Posterior vena cava (tissue), 2 donors: ENCODE measurements at regions of chr18 and their contacts with region 1.

Region 1: GRCh38 chr18:36296650-36297416 is 680 bp upstream of the FHOD3 start:
- DNase-seq: peak; percentile 87

Region 2: GRCh38 chr18:36441426-36442240 is 144.8 kb after region 1 on chr18:
- intact Hi-C with region 1: loop called in 1 of 2 experiments (anchors 10 kb)
- DNase-seq: no peak

Region 3: GRCh38 chr18:36572135-36572856 is 275.5 kb after region 1 on chr18:
- intact Hi-C with region 1: loop called (anchors 1 to 5 kb)
- DNase-seq: no peak

Region 4: GRCh38 chr18:36757081-36757480 is 460.2 kb after region 1 on chr18:
- intact Hi-C with region 1: loop called in 1 of 2 experiments (anchors 10 kb)
- DNase-seq: no peak